ENCODE measurements at regions of chr3 and their contacts with region 1.

Region 1: DNA sequence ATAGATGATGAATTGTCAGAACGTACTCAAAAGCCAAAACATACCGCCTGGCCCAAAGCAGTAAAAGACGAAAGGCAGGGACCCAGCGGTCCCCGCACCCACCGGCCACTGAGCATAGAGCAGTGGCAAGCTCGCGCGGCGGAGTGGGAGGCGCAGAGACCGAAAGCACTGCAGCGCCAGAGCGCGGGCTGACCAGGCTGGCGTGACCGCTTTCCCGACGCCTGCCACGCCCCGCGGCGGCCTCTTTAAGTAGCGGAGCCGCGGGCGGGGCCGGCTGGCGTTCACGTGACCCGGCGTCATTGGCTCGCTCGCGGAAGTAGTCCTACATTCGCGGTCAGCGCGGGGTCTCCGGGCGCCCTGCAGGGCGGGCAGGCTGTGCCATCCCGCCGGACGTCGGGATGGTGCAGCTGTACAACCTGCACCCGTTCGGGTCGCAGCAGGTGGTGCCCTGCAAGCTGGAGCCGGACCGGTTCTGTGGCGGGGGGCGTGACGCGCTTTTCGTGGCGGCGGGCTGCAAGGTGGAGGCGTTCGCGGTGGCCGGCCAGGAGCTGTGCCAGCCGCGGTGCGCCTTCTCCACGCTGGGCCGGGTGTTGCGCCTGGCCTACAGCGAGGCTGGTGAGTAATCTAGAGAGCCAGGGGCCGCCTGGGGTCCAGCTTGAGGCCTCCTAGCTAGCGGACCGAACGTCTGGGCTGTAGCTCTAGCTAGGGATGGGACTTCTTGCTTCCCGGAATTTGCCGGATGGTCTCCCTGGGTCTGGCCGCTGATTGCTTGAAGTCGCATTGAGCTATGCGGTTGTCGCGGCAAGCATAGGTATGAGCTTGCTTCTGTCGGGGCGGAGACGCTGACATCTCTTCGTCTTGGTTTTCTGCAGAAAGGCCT is at the start of gene HPS3:
- DNase-seq: no peak
- H3K4me3 ChIP-seq: peak within 1 kb of the TSS; percentile 95
- CTCF ChIP-seq: peak; percentile 4

Region 2: DNA sequence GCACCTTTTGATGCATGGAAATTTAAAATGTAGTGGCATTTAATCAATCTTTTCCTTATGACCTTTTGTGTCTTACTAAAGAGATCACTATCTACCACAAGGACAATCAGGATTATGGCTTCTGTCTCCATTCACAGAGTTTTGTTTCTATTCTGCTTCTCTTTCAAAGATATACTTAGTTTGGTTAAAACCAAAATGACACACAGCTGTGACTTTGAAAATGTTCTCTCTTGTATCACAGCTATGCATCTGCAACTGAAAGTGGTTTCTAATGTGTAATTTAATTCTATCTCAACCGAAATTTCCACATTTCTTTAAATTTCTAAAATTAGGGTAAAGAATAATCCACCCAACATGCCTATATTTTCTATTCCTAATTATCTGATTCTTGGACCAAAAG is 71.0 kb before region 1 on chr3:
- CTCF ChIA-PET with region 1: no interaction called
- POLR2A ChIA-PET with region 1: no interaction called
- DNase-seq: no peak
- H3K4me3 ChIP-seq: no peak overlapping the region
- CTCF ChIP-seq: no peak

Region 3: DNA sequence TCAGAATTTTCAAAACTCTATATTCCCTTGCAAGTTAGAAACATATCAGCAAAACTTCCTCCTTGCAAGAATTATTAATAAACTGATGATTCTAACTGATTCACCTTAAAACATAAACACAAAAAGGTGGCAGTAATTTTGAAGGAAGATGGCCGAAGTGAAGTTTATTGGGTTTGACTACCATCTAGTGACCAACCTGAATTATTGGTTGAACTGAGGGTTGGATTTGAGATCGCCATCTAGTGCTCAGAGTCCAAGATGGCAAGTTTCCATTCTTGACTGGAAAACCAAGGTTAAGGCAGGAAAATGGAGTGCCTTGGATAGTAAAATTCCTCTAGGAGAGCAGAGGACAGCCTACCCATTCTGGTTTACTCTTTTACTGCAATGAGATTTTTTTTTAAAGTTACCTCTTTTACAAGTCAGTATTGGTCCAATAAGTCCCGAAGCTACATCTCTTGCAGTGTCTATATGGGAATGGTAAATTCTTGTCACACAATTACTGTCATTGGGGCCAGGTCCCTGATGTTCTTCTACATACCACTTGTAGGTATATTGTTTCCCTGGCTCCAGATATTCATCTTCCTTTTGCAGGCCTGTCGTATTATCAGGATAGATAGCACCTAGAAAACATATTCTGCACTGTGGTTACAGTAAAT is 143.7 kb after region 1 on chr3:
- CTCF ChIA-PET with region 1: interaction called, 25 read pairs
- POLR2A ChIA-PET with region 1: no interaction called
- DNase-seq: peak; percentile 58
- H3K4me3 ChIP-seq: no peak overlapping the region
- CTCF ChIP-seq: peak; percentile 79

Measured in AG04449 (cell line).